PC-9 (cell line): ENCODE measurements at regions of chr5 and their contacts with region 1.

Region 1: DNA sequence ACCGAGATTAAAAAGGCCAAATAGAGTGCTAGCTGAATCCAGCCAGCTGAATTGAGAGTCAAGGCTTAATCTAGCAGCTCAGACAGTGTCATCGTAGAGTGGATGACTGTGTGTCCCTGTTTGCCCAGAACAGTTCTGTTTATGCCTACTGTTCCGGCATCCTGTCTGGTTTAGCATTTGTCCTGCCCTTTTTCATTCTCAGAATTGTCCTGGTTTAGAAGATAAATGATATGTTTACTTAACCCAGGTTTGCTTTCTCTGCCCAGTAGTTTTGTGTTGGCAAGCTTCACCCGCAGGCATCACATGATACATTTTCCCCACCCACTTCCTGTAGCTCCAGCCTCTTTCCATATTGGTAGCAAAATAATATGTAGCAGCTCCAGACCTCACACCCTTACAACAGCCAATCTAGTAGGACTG is 41.3 kb upstream of the ZSWIM6 start:
- DNase-seq: peak; percentile 53 to 59
- H3K4me3 ChIP-seq: no peak overlapping the region
- H3K27ac ChIP-seq: no peak overlapping the region
- H3K4me1 ChIP-seq: peaks cover 32% of the 10 kb centered on the region
- H3K27me3 ChIP-seq: no peaks in the 10 kb centered on the region
- CTCF ChIP-seq: no peak

Region 2: DNA sequence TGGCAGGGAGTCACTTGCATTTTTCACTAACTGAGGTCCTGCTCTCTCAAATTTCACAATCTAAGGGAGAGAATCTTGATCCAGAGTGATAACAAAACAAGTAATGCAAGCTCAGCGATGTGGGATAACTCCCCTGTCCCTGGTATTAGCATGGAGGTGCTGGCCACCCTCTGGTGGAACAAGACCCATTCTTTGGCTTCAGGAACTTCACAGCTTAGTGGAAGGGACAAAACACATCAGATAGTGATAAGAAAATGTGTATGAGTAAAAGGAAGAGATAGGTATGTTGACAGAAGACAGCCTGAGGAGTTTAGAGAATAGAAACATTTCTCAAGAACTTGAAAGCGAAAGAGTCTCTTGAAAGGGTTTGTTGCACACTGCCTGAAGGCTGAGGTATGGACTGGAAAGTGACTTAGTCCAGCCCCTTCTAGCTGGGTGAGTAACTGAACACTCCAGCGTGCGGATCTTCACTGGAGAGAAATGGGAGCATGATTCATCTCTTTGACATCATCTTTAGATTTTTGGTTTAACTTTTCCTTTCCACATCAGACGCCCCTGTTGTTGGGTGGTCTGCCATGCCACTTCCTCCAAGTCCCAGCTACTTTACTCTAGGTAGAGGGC is 15.8 kb after region 1 on chr5:
- CTCF ChIA-PET with region 1: interaction called, 17 read pairs
- POLR2A ChIA-PET with region 1: interaction called, 6 read pairs
- intact Hi-C with region 1: loop called (anchors 1 kb)
- DNase-seq: peak in 1 of 2 experiments; percentile 76
- H3K4me3 ChIP-seq: no peak overlapping the region
- H3K27ac ChIP-seq: no peak overlapping the region
- H3K4me1 ChIP-seq: peaks cover 71% of the 10 kb centered on the region
- H3K27me3 ChIP-seq: no peaks in the 10 kb centered on the region
- CTCF ChIP-seq: no peak

Region 3: GRCh38 chr5:61311837-61312808 is 21.3 kb after region 1 on chr5:
- CTCF ChIA-PET with region 1: interaction called, 17 read pairs
- POLR2A ChIA-PET with region 1: no interaction called
- intact Hi-C with region 1: loop called (anchors 1 kb)
- DNase-seq: peak; percentile 35 to 94
- H3K4me3 ChIP-seq: no peak overlapping the region
- H3K27ac ChIP-seq: peak overlapping the region; percentile 54
- H3K4me1 ChIP-seq: peaks cover 56% of the 10 kb centered on the region
- H3K27me3 ChIP-seq: no peaks in the 10 kb centered on the region
- CTCF ChIP-seq: no peak